ENCODE measurements at regions of chrX and their contacts with region 1.

Region 1: DNA sequence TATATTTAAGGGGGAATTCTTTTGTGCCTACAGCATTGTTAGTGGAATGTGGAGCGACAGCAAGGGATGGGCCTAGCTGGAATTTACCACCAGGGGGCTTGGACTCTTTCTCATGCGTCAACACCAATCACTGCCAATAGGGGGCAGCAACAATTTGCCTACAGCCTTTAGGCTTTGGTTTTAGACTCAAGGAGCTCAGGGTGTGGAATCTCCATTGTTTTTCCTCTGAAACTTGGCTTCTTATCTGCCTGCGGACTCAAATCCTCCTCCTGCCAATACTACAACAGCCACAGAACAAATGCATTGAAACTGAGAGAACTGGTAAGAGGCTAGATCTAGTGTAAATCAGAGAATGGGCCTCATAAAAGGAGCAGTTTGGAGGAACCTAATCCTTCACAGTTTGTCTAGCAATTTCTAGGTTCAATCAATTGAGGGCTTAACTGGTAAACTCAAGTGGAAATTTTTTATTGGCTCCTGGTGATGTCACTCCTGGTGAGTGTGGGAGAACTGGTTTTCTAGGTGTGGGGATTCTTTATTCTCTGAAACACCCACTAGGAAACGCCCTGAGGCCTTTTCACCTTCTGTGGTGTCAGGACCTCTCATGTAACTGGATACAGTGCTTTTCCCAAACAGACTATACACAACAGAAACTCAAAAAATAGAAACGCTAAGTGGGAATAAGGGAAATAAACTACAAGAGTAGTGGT is 27.9 kb upstream of the TMSB4X start:
- DNase-seq: peak; percentile 65
- H3K4me3 Mint-ChIP-seq: peak overlapping the region; percentile 49
- H3K27ac Mint-ChIP-seq: peak overlapping the region; percentile 95
- H3K4me1 Mint-ChIP-seq: peaks cover 60% of the 10 kb centered on the region
- H3K27me3 Mint-ChIP-seq: no peaks in the 10 kb centered on the region

Region 2: DNA sequence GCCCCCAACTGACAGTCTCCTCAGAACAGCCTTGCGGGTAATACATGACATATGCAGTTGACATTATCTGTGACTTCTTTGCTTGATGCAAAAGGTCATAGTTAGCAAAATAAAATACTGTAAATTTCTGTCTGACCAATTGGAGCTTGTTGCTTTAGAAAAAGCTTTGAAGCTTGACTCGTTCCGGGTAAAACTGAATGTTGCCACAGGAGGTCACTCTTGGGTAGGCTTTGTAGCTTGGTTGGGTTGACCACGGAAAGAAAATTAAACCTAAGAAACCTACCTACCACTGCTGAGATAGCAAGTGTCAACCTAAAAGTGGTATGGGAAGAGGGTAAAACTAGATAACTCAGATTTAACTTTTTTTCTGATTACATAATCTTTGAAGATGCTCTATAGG is 132.6 kb before region 1 on chrX:
- intact Hi-C with region 1: loop called (anchors 1 kb)
- DNase-seq: peak; percentile 32
- H3K4me3 Mint-ChIP-seq: no peak overlapping the region
- H3K27ac Mint-ChIP-seq: no peak overlapping the region
- H3K4me1 Mint-ChIP-seq: peaks cover 34% of the 10 kb centered on the region
- H3K27me3 Mint-ChIP-seq: no peaks in the 10 kb centered on the region

Region 3: GRCh38 chrX:12974796-12975669 is 28.0 kb after region 1 on chrX and contains the start of gene TMSB4X:
- intact Hi-C with region 1: loop called (anchors 1 kb)
- DNase-seq: peak; percentile 83
- H3K4me3 Mint-ChIP-seq: peak within 1 kb of the TSS; percentile 97
- H3K27ac Mint-ChIP-seq: peak within 1 kb of the TSS; percentile 98
- H3K4me1 Mint-ChIP-seq: peaks cover 50% of the 10 kb centered on the region
- H3K27me3 Mint-ChIP-seq: no peaks in the 10 kb centered on the region
- total RNA-seq, gene TMSB4X: 6,544 and 6,612 TPM in 2 replicates

Region 4: DNA sequence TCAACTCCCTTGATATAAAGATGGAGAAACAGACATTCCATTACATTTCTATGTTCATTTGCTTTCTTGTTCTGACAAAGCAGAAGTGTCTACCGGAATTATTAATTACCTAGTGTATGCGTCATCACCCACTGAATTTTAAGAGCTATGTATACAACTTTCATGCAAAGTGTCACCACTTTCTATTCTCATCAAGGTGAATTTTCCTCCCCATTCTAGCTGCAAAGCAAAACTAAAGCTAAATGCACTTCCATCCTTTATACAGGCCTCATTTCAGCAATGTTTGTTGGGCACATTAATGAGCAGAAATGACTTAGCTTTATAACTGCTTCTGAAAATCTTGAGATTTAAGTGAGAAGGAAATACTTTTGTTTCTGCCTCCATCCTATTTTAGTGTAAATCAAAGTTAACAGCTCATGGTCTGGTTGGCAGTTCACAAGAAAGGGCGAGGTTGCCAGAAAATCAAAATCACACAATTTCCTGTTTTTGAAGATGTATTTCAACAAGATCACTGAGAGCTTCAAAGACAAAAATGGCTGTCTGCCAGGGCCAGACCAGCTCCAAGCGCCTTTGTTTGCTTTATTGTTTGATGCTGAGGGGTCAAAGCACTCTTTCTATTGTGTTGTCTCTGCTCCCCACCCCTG is 104.7 kb after region 1 on chrX:
- intact Hi-C with region 1: loop called (anchors 1 kb)
- DNase-seq: no peak
- H3K4me3 Mint-ChIP-seq: peak overlapping the region; percentile 37
- H3K27ac Mint-ChIP-seq: peak overlapping the region; percentile 89
- H3K4me1 Mint-ChIP-seq: peaks cover 65% of the 10 kb centered on the region
- H3K27me3 Mint-ChIP-seq: peaks cover 1% of the 10 kb centered on the region

Region 5: DNA sequence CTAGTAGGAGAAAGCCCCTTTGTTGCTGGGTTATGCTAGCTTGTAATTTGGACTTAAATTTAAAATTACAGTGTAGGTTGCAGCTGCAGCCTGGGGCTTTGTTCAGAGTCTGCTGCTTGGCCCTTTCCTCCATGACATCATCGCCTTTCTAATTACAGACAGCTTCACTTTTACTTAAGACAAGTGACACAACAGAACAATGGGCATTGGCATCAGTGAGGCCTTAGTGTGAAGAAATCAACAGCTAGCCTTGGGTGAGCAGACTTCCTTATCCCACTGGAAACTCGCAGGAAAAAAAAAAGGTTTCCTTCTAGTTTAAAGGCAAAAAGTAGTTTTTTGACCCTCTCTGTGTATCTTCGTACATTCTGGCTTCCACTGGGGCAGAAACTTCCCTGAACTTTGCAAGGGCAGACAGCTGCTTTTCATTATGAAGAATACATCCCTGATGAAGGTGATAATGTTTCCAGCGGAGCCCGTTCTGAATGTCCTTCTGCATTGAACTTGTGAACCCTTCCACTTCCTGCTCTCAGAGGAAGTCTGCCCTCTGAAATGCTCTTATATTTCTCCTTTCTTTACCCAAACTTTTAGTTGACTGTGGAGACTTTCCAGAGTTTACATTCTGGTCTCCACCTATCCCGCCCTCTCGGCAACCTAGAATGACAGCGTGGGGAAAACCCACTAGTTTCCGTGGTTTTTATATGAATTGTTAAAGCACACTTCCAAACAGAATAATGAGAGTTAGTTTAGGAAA is 220.7 kb after region 1 on chrX:
- intact Hi-C with region 1: loop called (anchors 1 kb)
- DNase-seq: no peak
- H3K4me3 Mint-ChIP-seq: peak overlapping the region; percentile 53
- H3K27ac Mint-ChIP-seq: peak overlapping the region; percentile 91
- H3K4me1 Mint-ChIP-seq: peaks cover 29% of the 10 kb centered on the region
- H3K27me3 Mint-ChIP-seq: no peaks in the 10 kb centered on the region

Region 6: GRCh38 chrX:13376857-13377549 is 430.0 kb after region 1 on chrX:
- intact Hi-C with region 1: loop called (anchors 5 kb)
- DNase-seq: no peak
- H3K4me3 Mint-ChIP-seq: no peak overlapping the region
- H3K27ac Mint-ChIP-seq: peak overlapping the region; percentile 27
- H3K4me1 Mint-ChIP-seq: peaks cover 41% of the 10 kb centered on the region
- H3K27me3 Mint-ChIP-seq: no peaks in the 10 kb centered on the region

Region 7: GRCh38 chrX:13653022-13653693 is 706.2 kb after region 1 on chrX and contains the start of gene TCEANC:
- intact Hi-C with region 1: loop called (anchors 2 kb)
- DNase-seq: peak; percentile 91
- H3K4me3 Mint-ChIP-seq: peak within 1 kb of the TSS; percentile 88
- H3K27ac Mint-ChIP-seq: peak within 1 kb of the TSS; percentile 92
- H3K4me1 Mint-ChIP-seq: peaks cover 20% of the 10 kb centered on the region
- H3K27me3 Mint-ChIP-seq: no peaks in the 10 kb centered on the region
- total RNA-seq, gene TCEANC: 3.9 and 5.0 TPM in 2 replicates

Measured in activated T-helper 1 cell treated with anti-CD3 and anti-CD28 coated beads, Interleukin-12 subunit alpha, Interleukin-12 subunit beta, Interleukin-2, Interleukin-4 antibody, amounts not matched to agents 30 ng/mL and 10 ng/mL and 1 ng/mL, durations not matched to agents 14 hours and 24 hours and 36 hours (primary cell).